Activated CD4-positive, alpha-beta memory T cell treated with anti-CD3 and anti-CD28 coated beads, Interleukin-2, amount 10 ng/mL, durations not matched to agents 7 days and 5 days (primary cell): ENCODE measurements at regions of chr18 and their contacts with region 1.

Region 1: DNA sequence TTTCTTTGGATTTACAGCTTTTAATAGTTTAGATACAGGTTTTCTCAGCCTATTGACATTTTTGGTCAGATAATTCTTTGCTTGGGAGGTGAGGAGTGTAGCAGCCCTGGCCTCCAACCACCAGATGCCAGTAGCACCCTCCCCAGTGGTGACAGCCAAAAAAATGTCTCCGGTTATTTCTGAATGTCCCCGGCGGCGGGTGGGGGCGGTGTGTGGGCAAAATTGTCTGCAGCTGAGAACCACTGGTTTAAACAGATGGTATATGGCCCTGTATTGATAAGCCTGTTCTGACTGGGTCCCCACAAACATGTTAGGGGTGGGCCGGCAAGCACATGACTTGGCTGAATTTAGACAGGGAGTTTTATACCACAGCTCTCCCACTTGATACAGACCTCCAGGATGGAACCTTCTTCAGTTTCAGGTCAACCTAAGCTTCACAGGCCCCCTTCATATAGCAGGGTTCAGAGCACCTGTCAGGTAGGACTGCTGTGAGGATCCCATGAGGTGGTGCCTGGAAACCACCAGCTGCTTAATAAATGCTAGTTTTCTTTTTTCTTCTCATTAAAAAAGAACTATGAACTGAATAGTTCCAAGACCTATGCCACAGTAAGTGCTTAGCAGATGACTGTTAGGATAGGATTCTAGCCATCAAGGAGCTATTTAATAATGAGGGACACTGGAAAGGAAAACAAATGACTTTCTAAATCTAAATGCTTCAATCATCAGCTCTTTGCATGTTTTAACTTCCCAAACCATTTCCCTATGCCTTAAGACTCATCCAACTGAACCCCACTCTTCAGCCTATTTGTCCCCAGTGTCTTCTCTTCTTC is 18.1 kb downstream of the LPIN2 start:
- DNase-seq: peak; percentile 77
- H3K4me3 Mint-ChIP-seq: no peak overlapping the region
- H3K27ac Mint-ChIP-seq: peak overlapping the region; percentile 42
- H3K4me1 Mint-ChIP-seq: peaks cover 77% of the 10 kb centered on the region
- H3K27me3 Mint-ChIP-seq: no peaks in the 10 kb centered on the region

Region 2: DNA sequence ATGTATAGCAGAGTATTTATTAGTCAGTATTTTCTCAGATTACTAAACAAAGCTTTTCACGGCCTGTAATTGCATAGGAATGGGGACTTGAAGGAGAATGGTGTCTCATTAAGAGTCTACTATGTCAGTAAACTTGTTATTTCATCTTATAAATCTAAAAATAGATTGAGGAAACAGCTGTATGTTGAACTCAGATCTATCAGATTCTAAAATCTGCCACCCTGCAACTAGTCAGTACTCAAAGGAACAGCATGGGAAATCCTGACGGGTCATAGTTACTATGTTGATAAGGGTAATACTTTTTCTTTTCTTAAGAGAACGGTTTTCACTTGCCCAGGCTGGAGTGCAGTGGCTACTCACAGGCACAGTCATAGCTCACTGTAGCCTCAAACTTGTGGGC is 218.2 kb before region 1 on chr18:
- CTCF ChIA-PET with region 1: no interaction called
- POLR2A ChIA-PET with region 1: no interaction called
- DNase-seq: no peak
- H3K4me3 Mint-ChIP-seq: no peak overlapping the region
- H3K27ac Mint-ChIP-seq: no peak overlapping the region
- H3K4me1 Mint-ChIP-seq: peaks cover 5% of the 10 kb centered on the region
- H3K27me3 Mint-ChIP-seq: no peaks in the 10 kb centered on the region

Region 3: GRCh38 chr18:2958819-2959298 is 36.0 kb before region 1 on chr18:
- CTCF ChIA-PET with region 1: interaction called, 28 read pairs
- POLR2A ChIA-PET with region 1: interaction called, 4 read pairs
- DNase-seq: peak; percentile 67
- H3K4me3 Mint-ChIP-seq: peak overlapping the region; percentile 73
- H3K27ac Mint-ChIP-seq: peak overlapping the region; percentile 99
- H3K4me1 Mint-ChIP-seq: peaks cover 89% of the 10 kb centered on the region
- H3K27me3 Mint-ChIP-seq: no peaks in the 10 kb centered on the region

Region 4: GRCh38 chr18:3012964-3013804 is 18.4 kb after region 1 on chr18 and contains the start of gene LPIN2:
- CTCF ChIA-PET with region 1: interaction called, 18 read pairs
- POLR2A ChIA-PET with region 1: interaction called, 22 read pairs
- DNase-seq: peak; percentile 97
- H3K4me3 Mint-ChIP-seq: peak within 1 kb of the TSS; percentile 90
- H3K27ac Mint-ChIP-seq: peak within 1 kb of the TSS; percentile 80
- H3K4me1 Mint-ChIP-seq: peaks cover 64% of the 10 kb centered on the region
- H3K27me3 Mint-ChIP-seq: no peaks in the 10 kb centered on the region
- total RNA-seq, gene LPIN2: 78.4 to 79.6 TPM

Region 5: DNA sequence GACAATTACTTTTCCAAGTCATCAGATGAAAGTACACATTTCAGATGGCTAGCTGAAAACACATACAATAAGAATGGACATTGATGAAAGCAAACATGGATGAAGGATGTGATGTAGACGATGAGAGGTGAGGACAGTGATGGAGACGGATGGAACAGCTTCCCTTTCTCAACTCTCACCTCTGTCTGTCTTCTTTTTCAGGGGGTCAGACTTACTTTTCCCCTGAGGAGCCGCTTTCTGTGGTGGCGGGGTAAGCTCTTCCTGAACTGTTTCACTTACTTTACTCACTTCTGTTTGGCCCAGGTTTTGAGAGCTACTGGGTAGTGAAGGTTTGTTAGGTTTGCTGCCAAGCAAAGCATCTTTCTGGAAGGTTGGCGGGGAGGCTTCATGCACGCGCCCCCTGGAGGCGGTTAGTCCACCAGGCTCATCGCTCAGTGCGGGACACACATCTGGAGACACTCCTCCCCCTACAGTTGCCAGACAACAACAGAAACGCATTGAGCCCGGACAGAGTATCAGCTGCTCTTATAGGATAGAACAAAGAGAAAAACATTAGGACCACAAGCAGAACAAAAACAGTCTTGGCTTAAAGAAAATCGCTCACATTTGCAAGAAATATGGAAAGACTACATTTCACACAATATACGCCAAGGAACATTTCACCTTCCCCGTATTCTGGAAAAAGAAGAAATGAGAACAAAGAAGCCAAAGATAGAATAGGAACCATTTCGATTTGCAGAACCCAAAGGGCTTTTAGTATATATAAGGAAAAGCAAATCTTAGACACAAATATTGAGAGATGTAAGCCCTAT is 134.4 kb after region 1 on chr18:
- CTCF ChIA-PET with region 1: interaction called, 78 read pairs
- POLR2A ChIA-PET with region 1: interaction called, 3 read pairs
- DNase-seq: peak; percentile 84
- H3K4me3 Mint-ChIP-seq: no peak overlapping the region
- H3K27ac Mint-ChIP-seq: no peak overlapping the region
- H3K4me1 Mint-ChIP-seq: peaks cover 9% of the 10 kb centered on the region
- H3K27me3 Mint-ChIP-seq: peaks cover 2% of the 10 kb centered on the region